Activated naive CD4-positive, alpha-beta T cell treated with anti-CD3 and anti-CD28 coated beads for 36 hours (primary cell): ENCODE measurements at regions of chr1 and their contacts with region 1.

Region 1: DNA sequence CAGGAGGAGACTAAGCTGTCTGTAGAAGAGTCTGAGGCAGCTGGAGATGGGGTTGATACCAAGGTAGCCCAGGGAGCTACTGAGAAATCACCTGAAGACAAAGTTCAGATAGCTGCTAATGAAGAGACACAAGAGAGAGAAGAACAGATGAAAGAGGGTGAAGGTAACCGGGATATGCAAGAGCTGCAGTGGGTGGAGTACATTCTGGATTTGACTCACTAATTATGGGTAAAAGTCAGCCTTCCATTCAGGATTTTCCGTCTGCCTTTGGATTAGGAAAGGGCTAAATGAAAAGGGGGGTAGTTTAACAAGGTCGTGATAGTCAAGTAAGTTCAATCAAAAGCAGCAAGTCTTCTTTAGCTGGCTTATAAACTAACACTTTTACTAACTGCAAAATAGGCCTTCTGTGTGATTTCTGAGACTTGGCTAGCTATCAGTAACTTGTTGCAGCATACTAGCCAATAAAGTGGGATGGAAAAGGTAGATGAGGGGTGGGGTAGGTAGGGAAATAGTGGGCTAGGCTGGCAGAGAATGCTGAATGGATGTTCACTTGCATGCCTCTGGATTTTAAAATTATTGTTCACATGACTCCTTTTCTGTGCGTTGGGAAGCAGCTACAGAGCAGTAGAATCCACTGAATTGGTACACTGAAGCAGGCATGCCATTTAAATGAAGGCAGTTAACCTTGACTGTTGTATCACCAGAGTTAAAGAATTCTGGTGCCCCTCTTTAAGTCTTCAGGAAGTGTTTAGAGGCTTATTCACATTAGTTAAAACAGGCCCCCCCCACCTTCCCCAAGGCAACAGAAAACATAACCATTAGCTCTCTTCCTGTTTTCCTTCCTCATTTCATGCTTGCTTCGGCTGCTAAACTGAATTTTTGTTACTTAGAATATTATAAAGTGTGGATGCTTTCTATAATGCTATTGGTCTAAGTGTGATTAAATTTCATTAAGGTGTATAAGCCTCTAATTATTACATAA is 15.4 kb downstream of the CCDC17 start:
- DNase-seq: no peak
- H3K4me3 Mint-ChIP-seq: no peak overlapping the region
- H3K27ac Mint-ChIP-seq: peak overlapping the region; percentile 1
- H3K4me1 Mint-ChIP-seq: peaks cover 15% of the 10 kb centered on the region
- H3K27me3 Mint-ChIP-seq: no peaks in the 10 kb centered on the region

Region 2: GRCh38 chr1:45490626-45491486 is 117.6 kb before region 1 on chr1 and contains the start of gene TESK2:
- CTCF ChIA-PET with region 1: no interaction called
- intact Hi-C with region 1: no loop called
- DNase-seq: peak; percentile 99
- H3K4me3 Mint-ChIP-seq: no peak within 1 kb of the TSS
- H3K27ac Mint-ChIP-seq: no peak within 1 kb of the TSS
- H3K4me1 Mint-ChIP-seq: peaks cover 6% of the 10 kb centered on the region
- H3K27me3 Mint-ChIP-seq: no peaks in the 10 kb centered on the region
- total RNA-seq, gene TESK2: 4.8 to 6.7 TPM

Region 3: GRCh38 chr1:45654540-45655280 is 46.2 kb after region 1 on chr1:
- CTCF ChIA-PET with region 1: no interaction called
- intact Hi-C with region 1: loop called (anchors 5 kb)
- DNase-seq: no peak
- H3K4me3 Mint-ChIP-seq: no peak overlapping the region
- H3K27ac Mint-ChIP-seq: peak overlapping the region; percentile 19
- H3K4me1 Mint-ChIP-seq: peaks cover 10% of the 10 kb centered on the region
- H3K27me3 Mint-ChIP-seq: no peaks in the 10 kb centered on the region

Region 4: GRCh38 chr1:45679123-45679522 is 70.7 kb after region 1 on chr1:
- CTCF ChIA-PET with region 1: no interaction called
- intact Hi-C with region 1: no loop called
- DNase-seq: no peak
- H3K4me3 Mint-ChIP-seq: no peak overlapping the region
- H3K27ac Mint-ChIP-seq: no peak overlapping the region
- H3K4me1 Mint-ChIP-seq: peaks cover 67% of the 10 kb centered on the region
- H3K27me3 Mint-ChIP-seq: no peaks in the 10 kb centered on the region

Region 5: GRCh38 chr1:45721207-45721606 is 112.7 kb after region 1 on chr1:
- CTCF ChIA-PET with region 1: no interaction called
- intact Hi-C with region 1: no loop called
- DNase-seq: no peak
- H3K4me3 Mint-ChIP-seq: no peak overlapping the region
- H3K27ac Mint-ChIP-seq: no peak overlapping the region
- H3K4me1 Mint-ChIP-seq: no peaks in the 10 kb centered on the region
- H3K27me3 Mint-ChIP-seq: no peaks in the 10 kb centered on the region